Colonic mucosa (tissue), 4 donors: ENCODE measurements at regions of chr17 and their contacts with region 1.

Region 1: DNA sequence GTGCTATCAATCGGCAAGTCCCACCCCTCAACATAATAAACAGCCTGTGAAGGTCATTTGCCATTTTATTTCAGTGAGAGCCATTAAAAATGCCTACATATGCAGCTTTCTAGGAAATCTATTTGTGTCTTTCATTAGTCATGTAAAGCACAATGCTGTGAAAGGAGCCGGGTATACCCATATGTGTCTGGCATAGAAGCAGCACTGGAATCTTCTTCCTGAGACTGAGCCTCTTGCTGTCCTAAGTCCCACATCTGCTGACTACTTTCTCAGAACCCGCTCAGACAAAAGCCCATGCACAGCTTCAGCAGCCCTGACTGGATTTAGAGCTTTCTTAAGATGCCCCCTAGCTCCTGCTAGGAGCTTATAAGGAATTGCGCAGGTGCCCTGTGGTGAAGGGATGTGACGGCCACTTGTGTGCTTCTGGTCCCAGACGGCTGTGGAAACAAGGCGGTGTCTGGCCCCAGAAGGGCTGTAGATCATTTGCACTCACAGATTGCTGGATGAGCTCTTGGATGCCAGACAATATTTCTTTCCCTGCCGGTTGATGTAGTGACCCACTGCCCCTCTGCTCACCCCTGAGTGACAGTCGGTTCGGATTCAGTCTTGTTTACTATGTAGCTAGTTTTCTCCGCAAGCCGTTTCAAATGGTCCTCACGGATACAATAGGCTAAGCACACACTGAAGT is 172.2 kb downstream of the ANKFN1 start:
- DNase-seq: no peak
- H3K4me3 ChIP-seq: no peak overlapping the region
- H3K27ac ChIP-seq: no peak overlapping the region
- H3K4me1 ChIP-seq: no peaks in the 10 kb centered on the region
- H3K27me3 ChIP-seq: no peaks in the 10 kb centered on the region
- CTCF ChIP-seq: no peak

Region 2: DNA sequence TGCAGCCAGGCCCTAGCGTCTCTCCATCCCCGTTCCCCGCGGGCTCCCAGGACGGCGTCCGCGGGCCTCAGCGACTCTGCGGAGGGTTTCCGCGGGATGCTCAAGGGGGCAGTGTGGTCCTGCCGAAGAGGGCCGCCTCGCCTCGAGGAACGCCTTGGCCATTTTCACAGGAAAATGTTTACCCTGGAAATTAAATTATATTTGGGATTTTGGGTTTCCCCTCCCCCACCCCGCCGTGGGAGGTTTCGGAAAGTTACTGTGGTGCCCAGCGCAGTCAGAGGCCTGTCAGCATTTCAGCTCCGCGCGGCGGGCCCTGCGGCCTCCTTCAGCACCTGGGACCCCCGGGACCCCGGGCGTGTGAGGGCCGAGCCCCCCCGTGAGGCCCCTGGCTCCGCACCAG is 480.1 kb before region 1 on chr17:
- intact Hi-C with region 1: loop called (anchors 10 kb)
- DNase-seq: peak; percentile 48
- H3K4me3 ChIP-seq: no peak overlapping the region
- H3K27ac ChIP-seq: no peak overlapping the region
- H3K4me1 ChIP-seq: no peaks in the 10 kb centered on the region
- H3K27me3 ChIP-seq: no peaks in the 10 kb centered on the region
- CTCF ChIP-seq: peak; percentile 34

Region 3: DNA sequence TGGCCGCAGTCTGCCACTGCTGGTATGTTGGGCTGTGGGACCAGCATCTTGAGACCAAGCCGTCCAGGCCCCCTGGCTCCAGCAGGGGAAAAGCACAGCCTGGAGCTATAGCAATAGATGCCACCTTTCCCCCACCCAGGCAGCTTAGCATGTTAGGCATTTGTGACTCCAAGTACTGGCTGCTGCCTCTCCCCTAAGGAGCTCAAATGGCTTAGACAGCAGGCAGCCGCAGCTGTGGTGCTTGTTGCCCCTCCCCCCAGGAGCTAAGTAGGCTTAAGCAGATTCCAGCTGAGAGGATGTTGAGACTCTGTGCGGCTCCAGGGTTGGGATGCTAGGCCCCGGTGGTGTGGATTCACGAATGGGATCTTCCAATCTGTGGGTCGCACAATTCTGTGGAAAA is 261.0 kb before region 1 on chr17:
- intact Hi-C with region 1: no loop called
- DNase-seq: no peak
- H3K4me3 ChIP-seq: no peak overlapping the region
- H3K27ac ChIP-seq: no peak overlapping the region
- H3K4me1 ChIP-seq: no peaks in the 10 kb centered on the region
- H3K27me3 ChIP-seq: no peaks in the 10 kb centered on the region
- CTCF ChIP-seq: no peak

Region 4: GRCh38 chr17:56284482-56284881 is 41.0 kb before region 1 on chr17:
- intact Hi-C with region 1: loop called (anchors 5 kb)
- DNase-seq: no peak
- H3K4me3 ChIP-seq: no peak overlapping the region
- H3K27ac ChIP-seq: no peak overlapping the region
- H3K4me1 ChIP-seq: no peaks in the 10 kb centered on the region
- H3K27me3 ChIP-seq: no peaks in the 10 kb centered on the region
- CTCF ChIP-seq: no peak